ENCODE measurements at regions of chr4 and their contacts with region 1.

Region 1: DNA sequence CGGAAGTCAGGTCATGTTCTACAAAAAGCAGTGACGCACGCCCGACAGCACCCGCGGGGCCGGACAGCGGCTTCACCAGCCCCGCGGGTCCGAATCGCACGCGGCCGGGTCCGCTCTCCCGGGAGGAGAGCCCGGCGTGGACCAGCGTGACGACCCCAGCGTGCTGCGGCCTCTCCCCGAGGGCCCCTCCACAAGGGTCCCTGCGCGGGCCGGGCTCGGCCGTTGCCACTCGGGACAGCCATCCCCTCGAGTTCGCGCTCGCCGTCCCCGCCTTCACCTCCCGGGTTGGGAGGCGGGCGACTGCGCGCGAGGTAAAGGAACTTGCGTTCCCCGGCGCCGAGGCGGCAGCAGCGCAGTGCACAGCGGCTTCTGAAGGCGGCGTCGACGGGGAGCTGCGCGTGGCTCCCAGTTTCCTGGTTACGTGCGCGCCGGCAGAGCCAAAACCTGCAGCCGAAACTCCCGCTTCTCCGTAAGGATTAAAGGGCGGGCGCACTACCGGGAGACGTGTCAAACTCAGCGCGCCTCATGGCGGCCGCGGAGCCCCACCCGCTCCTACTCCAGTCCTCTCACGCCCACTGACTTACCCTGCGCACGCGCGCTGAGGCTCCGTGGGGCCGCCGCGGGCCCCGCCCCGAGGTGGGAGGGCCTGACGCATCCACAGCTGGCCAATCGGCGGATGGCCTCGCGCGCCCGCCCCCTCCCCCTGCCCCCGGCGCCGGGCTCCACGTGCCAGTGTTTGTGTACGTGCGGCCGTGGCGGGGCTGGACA is 416 bp upstream of the LRP2BP start:
- DNase-seq: peak; percentile 96 to 99
- H3K4me3 ChIP-seq: peak overlapping the region; percentile 86 to 87
- H3K27ac ChIP-seq: peak overlapping the region; percentile 99 to 100
- H3K4me1 ChIP-seq: peaks cover 2 to 13% of the 10 kb centered on the region in 2 donors
- H3K27me3 ChIP-seq: no peaks in the 10 kb centered on the region
- CTCF ChIP-seq: no peak

Region 2: DNA sequence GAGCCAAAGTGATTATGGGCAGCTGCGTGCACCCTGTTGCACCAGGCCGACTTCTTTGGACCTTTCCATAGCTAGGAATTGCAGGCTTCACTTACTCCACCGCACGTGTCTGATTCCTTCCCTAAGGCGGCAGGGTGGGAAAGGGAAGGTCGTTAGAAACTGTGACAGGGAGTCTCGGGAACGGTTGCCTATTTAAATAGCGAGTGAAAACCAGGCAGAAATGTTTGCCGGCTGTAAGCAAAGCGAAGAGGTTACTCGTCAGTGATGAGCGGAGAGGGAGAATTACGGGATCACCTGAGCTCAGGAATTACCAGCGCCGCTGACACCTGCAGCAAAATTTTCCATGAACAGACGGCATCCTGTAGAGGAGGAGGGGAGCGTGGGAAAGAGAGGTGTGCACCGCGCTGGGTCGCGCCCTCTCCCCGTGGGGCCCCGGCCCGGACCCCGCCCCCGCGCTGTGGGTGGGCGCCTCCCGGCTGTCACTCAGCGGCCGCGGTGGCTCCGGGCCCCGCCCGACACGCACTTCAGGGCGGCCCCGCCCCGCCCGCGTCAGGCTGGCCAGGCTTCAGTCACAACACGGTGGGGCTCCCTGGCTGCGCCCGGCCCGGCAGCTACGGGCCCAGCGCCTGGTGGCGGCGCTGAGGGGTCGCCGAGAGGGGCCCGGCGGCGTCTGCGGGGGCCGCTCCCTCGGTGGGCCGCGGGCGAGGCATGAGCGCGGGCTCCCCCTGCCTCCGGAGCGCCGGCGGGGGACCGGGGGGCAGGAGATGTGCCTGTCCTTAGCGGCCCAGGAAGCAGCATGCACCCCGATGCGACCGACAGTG is 186.9 kb before region 1 on chr4 and contains the start of gene SNX25:
- intact Hi-C with region 1: loop called (anchors 2 kb)
- DNase-seq: peak; percentile 58 to 93
- H3K4me3 ChIP-seq: peak within 1 kb of the TSS; percentile 63 to 86
- H3K27ac ChIP-seq: peak within 1 kb of the TSS; percentile 84 to 95
- H3K4me1 ChIP-seq: peaks cover 0 to 14% of the 10 kb centered on the region in 2 donors
- H3K27me3 ChIP-seq: no peaks in the 10 kb centered on the region
- CTCF ChIP-seq: peak in 1 of 3 experiments; percentile 39
- total RNA-seq, gene SNX25: 18.7 TPM

Region 3: GRCh38 chr4:185358514-185358913 is 37.6 kb before region 1 on chr4:
- intact Hi-C with region 1: loop called (anchors 2 kb)
- DNase-seq: peak in 1 of 2 donors; percentile 79
- H3K4me3 ChIP-seq: no peak overlapping the region
- H3K27ac ChIP-seq: peak overlapping the region; percentile 84 to 90
- H3K4me1 ChIP-seq: peaks cover 4 to 48% of the 10 kb centered on the region in 2 donors
- H3K27me3 ChIP-seq: no peaks in the 10 kb centered on the region
- CTCF ChIP-seq: no peak

Region 4: DNA sequence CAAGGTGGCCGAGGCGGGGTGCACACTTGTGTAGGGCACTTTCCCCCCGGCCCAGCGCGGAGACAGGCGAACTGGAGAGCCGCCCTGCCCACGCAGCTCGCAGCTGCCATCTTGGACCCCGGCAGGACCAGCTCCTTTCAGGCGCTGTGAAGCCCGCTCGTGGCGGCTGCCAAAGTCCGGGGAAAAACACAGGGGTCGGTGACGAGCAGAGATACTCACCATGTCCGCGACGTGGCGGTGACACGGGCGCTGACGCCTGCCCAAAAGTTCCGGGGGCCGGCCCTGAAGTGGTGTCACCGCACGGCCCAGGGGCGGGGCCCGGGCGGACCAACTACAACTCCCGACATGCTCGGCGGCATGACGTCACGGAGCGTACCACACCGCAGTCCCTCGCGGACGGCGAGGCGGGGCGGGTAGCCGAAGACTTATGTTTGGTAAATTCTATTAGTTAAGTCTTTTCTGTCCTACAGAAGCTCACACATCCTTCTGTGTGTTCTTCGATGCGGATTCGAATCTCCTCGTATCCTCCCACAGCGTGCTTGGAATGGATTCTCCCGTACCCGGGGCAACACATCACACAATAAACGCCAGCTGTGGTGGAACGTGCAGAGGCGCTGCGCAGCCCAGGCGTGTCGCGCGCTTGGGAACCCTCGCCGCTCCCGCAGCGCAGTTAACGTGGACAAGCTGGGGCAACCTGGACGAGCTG is 29.7 kb after region 1 on chr4 and contains the start of gene UFSP2:
- intact Hi-C with region 1: loop called (anchors 1 kb)
- DNase-seq: peak; percentile 69 to 95
- H3K4me3 ChIP-seq: peak within 1 kb of the TSS; percentile 66 to 80
- H3K27ac ChIP-seq: peak within 1 kb of the TSS; percentile 88 to 96
- H3K4me1 ChIP-seq: peaks cover 0 to 15% of the 10 kb centered on the region in 2 donors
- H3K27me3 ChIP-seq: no peaks in the 10 kb centered on the region
- CTCF ChIP-seq: no peak
- total RNA-seq, gene UFSP2: 8.6 TPM

Region 5: GRCh38 chr4:185597532-185598188 is 201.5 kb after region 1 on chr4:
- intact Hi-C with region 1: loop called (anchors 10 kb)
- DNase-seq: peak; percentile 28 to 88
- H3K4me3 ChIP-seq: no peak overlapping the region
- H3K27ac ChIP-seq: peak overlapping the region; percentile 66 to 72
- H3K4me1 ChIP-seq: peaks cover 0 to 17% of the 10 kb centered on the region in 2 donors
- H3K27me3 ChIP-seq: no peaks in the 10 kb centered on the region
- CTCF ChIP-seq: peak; percentile 93 to 99 (median 95)

Region 6: GRCh38 chr4:185682236-185682635 is 286.1 kb after region 1 on chr4:
- intact Hi-C with region 1: no loop called
- DNase-seq: no peak
- H3K4me3 ChIP-seq: no peak overlapping the region
- H3K27ac ChIP-seq: no peak overlapping the region
- H3K4me1 ChIP-seq: peaks cover 3 to 18% of the 10 kb centered on the region in 2 donors
- H3K27me3 ChIP-seq: no peaks in the 10 kb centered on the region
- CTCF ChIP-seq: no peak

Measured in ascending aorta (tissue), 2 donors.